AG04450 (cell line): ENCODE measurements at regions of chr5 and their contacts with region 1.

Region 1: DNA sequence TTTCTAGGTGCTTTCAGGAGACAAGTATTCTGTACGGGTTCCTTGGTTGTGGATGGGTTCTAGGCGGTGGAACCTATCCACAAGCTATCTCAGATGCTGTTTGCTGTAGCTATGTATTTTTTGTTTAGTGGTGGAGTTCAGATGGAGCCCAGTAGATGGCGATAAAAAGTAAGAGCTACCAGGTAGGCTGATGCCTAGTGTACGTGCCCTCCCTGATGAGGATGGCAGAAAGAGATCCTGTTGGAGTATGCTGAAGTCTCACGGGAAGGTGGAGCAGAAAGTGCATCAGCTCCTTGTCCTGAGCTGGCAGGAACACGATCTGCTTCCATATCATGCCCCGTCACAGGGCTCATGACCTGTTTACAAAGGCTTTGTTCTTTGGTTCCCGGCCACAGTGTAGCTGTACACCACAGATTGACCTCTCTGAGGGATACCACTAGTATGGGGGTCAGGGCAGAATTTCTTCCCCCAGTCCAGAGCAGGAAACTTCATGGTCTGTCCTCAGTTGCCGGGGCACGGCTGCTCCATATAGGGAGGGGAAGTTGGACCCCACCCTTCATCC is 12.6 kb upstream of the UGT3A2 start:
- DNase-seq: peak; percentile 10
- H3K4me3 ChIP-seq: no peak overlapping the region
- H3K27ac ChIP-seq: no peak overlapping the region
- H3K27me3 ChIP-seq: peaks cover 9% of the 10 kb centered on the region
- CTCF ChIP-seq: peak; percentile 77

Region 2: GRCh38 chr5:36096486-36096885 is 17.2 kb after region 1 on chr5:
- CTCF ChIA-PET with region 1: interaction called, 77 read pairs
- POLR2A ChIA-PET with region 1: no interaction called
- DNase-seq: no peak
- H3K4me3 ChIP-seq: no peak overlapping the region
- H3K27ac ChIP-seq: no peak overlapping the region
- H3K27me3 ChIP-seq: no peaks in the 10 kb centered on the region
- CTCF ChIP-seq: no peak

Region 3: DNA sequence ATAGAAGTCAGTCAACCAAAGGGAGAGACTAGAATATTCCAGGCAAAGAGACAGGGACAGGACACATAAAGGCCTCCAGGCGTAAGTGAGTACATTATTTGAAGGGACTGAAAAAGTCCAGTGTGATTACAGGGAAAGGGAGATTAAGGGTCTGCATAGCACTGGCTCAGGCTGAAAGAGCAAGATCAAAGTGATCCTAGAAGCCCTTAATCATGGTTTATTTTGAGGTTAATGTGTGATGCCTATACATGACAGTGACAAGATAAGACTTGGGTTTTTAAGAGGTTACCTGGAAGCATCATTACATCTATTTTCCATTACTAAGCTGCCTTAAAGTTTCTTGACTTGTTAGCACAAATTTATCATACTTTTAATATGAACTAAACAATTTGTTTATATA is 46.6 kb after region 1 on chr5:
- CTCF ChIA-PET with region 1: interaction called, 13 read pairs
- POLR2A ChIA-PET with region 1: no interaction called
- DNase-seq: no peak
- H3K4me3 ChIP-seq: no peak overlapping the region
- H3K27ac ChIP-seq: no peak overlapping the region
- H3K27me3 ChIP-seq: no peaks in the 10 kb centered on the region
- CTCF ChIP-seq: no peak

Region 4: GRCh38 chr5:36177715-36178523 is 98.6 kb after region 1 on chr5:
- CTCF ChIA-PET with region 1: interaction called, 28 read pairs
- POLR2A ChIA-PET with region 1: no interaction called
- DNase-seq: peak; percentile 15
- H3K4me3 ChIP-seq: no peak overlapping the region
- H3K27ac ChIP-seq: no peak overlapping the region
- H3K27me3 ChIP-seq: no peaks in the 10 kb centered on the region
- CTCF ChIP-seq: peak; percentile 68

Region 5: GRCh38 chr5:36397901-36398536 is 318.7 kb after region 1 on chr5:
- CTCF ChIA-PET with region 1: interaction called, 13 read pairs
- POLR2A ChIA-PET with region 1: no interaction called
- DNase-seq: no peak
- H3K4me3 ChIP-seq: no peak overlapping the region
- H3K27ac ChIP-seq: no peak overlapping the region
- H3K27me3 ChIP-seq: no peaks in the 10 kb centered on the region
- CTCF ChIP-seq: peak; percentile 25; the same call in 1 of the 2 replicates